ENCODE measurements at regions of chr18 and their contacts with region 1.

Region 1: GRCh38 chr18:23871410-23871809 is 143.1 kb upstream of the TTC39C start:
- DNase-seq: peak in 1 of 2 experiments; percentile 66
- H3K4me3 ChIP-seq: no peak overlapping the region
- H3K27ac ChIP-seq: peak overlapping the region; percentile 90
- H3K4me1 ChIP-seq: peaks cover 47% of the 10 kb centered on the region
- H3K27me3 ChIP-seq: no peaks in the 10 kb centered on the region
- CTCF ChIP-seq: no peak

Region 2: GRCh38 chr18:23259701-23260582 is 611.5 kb before region 1 on chr18:
- CTCF ChIA-PET with region 1: no interaction called
- POLR2A ChIA-PET with region 1: no interaction called
- intact Hi-C with region 1: no loop called
- DNase-seq: peak; percentile 77 to 89
- H3K4me3 ChIP-seq: peak overlapping the region; percentile 48; the same call in 1 of the 2 replicates
- H3K27ac ChIP-seq: peak overlapping the region; percentile 91
- H3K4me1 ChIP-seq: peaks cover 45% of the 10 kb centered on the region
- H3K27me3 ChIP-seq: no peaks in the 10 kb centered on the region
- CTCF ChIP-seq: no peak

Region 3: DNA sequence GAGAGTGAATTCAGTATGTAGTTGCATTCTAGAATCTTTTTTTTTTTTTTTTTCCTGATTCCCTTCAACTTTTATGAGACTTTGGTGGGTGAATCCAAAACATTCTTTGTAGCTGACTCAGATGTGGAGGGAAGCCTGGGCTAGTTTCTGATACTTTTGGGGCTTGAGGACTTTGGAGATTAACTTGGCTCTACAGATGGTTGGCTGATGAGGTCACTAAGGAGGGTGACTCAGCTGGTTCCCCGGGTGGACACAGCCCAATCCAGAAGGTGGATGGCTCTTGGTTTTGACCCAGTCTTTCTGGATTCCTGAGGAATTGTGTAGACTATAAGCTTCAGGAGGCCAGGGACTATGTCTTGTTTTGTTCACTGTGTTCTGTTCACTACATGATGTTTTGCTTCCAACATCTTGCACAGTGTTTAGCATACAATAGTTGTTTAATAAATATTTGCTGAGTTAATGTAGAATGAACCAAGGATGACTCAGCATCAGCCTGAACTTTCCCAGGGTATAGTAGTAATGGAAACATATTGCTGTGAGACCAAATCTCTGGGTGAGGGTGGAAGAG is 151.7 kb before region 1 on chr18:
- CTCF ChIA-PET with region 1: no interaction called
- POLR2A ChIA-PET with region 1: no interaction called
- intact Hi-C with region 1: loop called (anchors 10 kb)
- DNase-seq: peak; percentile 48 to 83
- H3K4me3 ChIP-seq: no peak overlapping the region
- H3K27ac ChIP-seq: peak overlapping the region; percentile 95
- H3K4me1 ChIP-seq: peaks cover 20% of the 10 kb centered on the region
- H3K27me3 ChIP-seq: no peaks in the 10 kb centered on the region
- CTCF ChIP-seq: no peak

Region 4: DNA sequence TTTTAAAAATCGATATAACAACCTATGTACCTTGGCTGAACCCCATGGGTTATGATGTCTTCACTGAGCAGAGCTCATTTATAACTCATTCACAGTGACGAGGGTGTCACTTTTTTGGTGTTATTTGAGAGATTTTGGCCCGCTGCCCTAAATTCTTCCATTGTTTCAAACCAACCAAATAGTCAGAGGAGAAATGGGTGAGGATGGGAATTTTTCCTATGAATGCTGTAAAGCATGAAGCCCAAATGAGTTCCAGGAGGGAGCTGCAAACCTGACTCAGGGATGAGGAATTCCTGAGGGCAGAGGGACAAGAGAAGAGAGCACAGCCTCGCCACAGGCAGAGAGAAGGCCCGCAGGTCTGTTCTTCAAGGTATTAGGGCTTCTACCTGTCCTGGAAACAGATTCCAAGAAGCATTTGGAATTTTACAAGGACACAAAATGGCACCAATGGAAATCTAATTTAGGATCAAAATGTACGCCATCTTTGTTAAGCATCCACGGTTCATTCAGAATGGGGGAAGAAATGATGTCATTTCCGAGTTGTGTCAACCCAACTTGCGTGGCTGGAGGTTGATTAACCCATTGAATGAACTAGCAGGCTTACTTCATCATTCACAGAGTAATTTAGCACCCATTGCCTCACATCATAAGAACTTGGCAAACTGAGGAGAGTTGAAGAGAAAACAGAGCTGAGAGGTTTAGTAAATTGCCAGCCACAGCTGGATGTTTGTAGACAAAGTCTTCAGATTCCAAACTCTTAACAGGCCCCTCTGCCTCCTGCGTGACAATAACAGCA is 48.6 kb before region 1 on chr18:
- CTCF ChIA-PET with region 1: no interaction called
- POLR2A ChIA-PET with region 1: interaction called, 6 read pairs
- intact Hi-C with region 1: loop called (anchors 1 kb)
- DNase-seq: peak; percentile 48 to 66
- H3K4me3 ChIP-seq: no peak overlapping the region
- H3K27ac ChIP-seq: no peak overlapping the region
- H3K4me1 ChIP-seq: 0 out of 2 replicates have a peak, but pooled peaks cover under 1% of the 10 kb centered on the region
- H3K27me3 ChIP-seq: no peaks in the 10 kb centered on the region
- CTCF ChIP-seq: no peak

Region 5: GRCh38 chr18:23844991-23845680 is 26.3 kb before region 1 on chr18:
- CTCF ChIA-PET with region 1: no interaction called
- POLR2A ChIA-PET with region 1: no interaction called
- intact Hi-C with region 1: loop called (anchors 1 kb)
- DNase-seq: peak in 1 of 2 experiments; percentile 63
- H3K4me3 ChIP-seq: no peak overlapping the region
- H3K27ac ChIP-seq: no peak overlapping the region
- H3K4me1 ChIP-seq: peaks cover 25% of the 10 kb centered on the region
- H3K27me3 ChIP-seq: no peaks in the 10 kb centered on the region
- CTCF ChIP-seq: no peak

Region 6: GRCh38 chr18:23884681-23885375 is 13.4 kb after region 1 on chr18:
- CTCF ChIA-PET with region 1: no interaction called
- POLR2A ChIA-PET with region 1: no interaction called
- intact Hi-C with region 1: no loop called
- DNase-seq: peak in 1 of 2 experiments; percentile 19
- H3K4me3 ChIP-seq: no peak overlapping the region
- H3K27ac ChIP-seq: no peak overlapping the region; the same call in 1 of the 2 replicates
- H3K4me1 ChIP-seq: no peaks in the 10 kb centered on the region
- H3K27me3 ChIP-seq: no peaks in the 10 kb centered on the region
- CTCF ChIP-seq: no peak

Measured in PC-9 (cell line).